ENCODE measurements at regions of chr1 and their contacts with region 1.

Region 1: DNA sequence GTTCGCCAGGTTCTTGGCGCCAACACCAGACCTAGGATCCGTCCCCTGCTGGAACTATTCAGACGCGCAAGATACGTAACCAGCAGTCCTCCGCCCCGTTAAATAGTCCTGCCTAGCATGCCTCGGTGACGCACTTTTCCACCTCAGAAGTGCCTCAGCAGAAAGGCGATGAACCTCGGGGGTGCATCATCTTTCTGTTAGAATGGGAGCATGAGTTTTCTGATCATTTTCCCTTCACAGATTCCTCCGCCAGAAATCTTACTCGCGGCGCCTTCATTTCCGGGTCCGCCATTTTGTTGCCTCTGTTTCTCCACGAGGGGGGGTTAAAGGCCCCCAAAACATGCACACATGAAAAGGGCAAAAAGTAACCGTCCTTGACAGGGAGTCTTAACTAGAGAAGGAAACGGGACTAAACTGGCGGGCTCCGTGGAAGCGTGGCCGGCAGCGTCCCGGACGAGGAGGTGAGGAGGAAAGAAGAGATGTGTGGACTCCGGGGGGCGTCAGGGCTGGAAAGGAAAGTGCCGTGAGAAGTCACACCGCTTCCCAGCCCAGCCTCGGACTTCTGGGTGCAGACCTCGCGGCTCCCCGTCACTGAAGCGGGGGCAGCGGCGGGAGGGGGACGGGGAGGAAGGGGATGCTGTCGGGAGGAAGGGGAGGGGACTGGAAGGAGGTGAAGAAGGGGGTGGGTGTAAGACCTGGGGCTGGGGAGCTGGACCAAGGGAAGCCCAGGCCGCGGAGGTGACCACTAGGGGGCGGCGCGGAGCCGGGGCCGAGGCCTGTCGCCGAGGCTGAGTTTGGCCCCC is at the start of gene GABPB2:
- DNase-seq: peak; percentile 91
- ATAC-seq: peak; percentile 93
- H3K4me3 ChIP-seq: peak within 1 kb of the TSS; percentile 88
- H3K27ac ChIP-seq: peak within 1 kb of the TSS; percentile 86
- H3K4me1 ChIP-seq: peaks cover 14% of the 10 kb centered on the region
- H3K27me3 ChIP-seq: no peaks in the 10 kb centered on the region
- CTCF ChIP-seq: peak; percentile 85
- total RNA-seq, gene GABPB2: 6.4 and 6.9 TPM in 2 replicates

Region 2: DNA sequence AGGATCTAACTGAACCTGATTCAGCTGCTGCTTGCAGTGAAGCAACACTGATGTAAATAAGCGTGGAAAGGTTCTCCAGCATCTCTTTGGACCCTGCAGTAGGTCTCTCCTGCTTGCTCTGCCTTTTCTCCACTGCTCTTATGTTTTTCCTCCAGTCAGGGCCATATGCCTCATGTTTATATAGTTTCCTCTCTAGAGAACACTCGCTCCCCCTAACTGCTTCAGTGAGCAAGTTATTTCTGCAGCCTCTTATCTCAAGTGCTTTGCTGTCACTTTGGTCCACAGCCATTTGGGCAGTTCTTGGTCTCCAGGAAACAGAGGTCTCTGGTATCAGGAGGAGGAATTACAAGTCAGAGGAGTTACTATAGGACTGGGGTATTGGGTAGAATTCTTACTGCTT is 57.2 kb before region 1 on chr1:
- CTCF ChIA-PET with region 1: no interaction called
- POLR2A ChIA-PET with region 1: no interaction called
- intact Hi-C with region 1: no loop called
- DNase-seq: no peak
- ATAC-seq: no peak
- H3K4me3 ChIP-seq: no peak overlapping the region
- H3K27ac ChIP-seq: no peak overlapping the region
- H3K4me1 ChIP-seq: peaks cover 15% of the 10 kb centered on the region
- H3K27me3 ChIP-seq: no peaks in the 10 kb centered on the region
- CTCF ChIP-seq: no peak

Region 3: DNA sequence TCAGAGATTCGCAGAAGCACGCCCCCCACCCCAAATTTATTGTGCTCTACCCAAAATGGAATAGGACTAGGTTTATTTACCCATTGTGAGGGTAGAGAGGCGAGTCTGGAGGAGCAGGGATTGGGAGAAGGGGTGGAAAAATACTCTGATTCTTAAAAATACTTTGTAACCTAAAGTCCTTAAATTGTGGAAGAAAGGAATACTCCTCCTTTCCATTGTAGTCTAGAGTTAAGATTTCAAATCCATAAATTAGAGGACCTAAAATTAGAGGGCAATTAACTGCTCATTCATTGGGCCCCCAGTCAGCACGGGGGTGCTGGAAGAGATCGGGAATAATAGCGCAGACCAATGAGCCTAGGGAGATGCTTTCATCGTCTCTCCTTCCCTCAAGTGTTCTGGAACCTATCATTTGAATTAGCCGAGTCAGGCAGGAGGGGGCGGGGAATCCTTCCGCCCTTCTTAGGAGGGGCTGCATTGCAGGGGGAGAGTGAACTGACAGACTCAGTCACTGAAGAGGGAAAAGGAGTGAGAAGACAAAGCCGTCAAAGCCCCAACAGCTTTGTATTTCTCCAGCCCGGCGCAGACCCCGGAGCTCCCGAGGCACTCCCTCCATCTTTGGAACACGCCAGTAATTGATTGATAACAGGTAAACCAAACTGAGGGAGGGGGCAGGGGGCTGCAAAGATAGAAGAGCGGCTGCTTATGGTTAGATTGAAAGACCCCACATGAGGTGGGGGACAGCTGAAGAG is 10.6 kb before region 1 on chr1 and contains the start of gene MLLT11:
- CTCF ChIA-PET with region 1: interaction called, 5 read pairs
- POLR2A ChIA-PET with region 1: no interaction called
- intact Hi-C with region 1: loop called (anchors 1 kb)
- DNase-seq: peak; percentile 66
- ATAC-seq: peak; percentile 53
- H3K4me3 ChIP-seq: peak within 1 kb of the TSS; percentile 99
- H3K27ac ChIP-seq: peak within 1 kb of the TSS; percentile 77
- H3K4me1 ChIP-seq: peaks cover 40% of the 10 kb centered on the region
- H3K27me3 ChIP-seq: no peaks in the 10 kb centered on the region
- CTCF ChIP-seq: peak; percentile 30; the same call in 1 of the 2 replicates
- total RNA-seq, gene MLLT11: 12.3 and 14.1 TPM in 2 replicates

Measured in PC-3 (cell line).